ENCODE measurements at regions of chr6 and their contacts with region 1.

Region 1: GRCh38 chr6:168640752-168641151 is 199.8 kb downstream of the SMOC2 start:
- DNase-seq: no peak
- H3K4me3 ChIP-seq: no peak overlapping the region
- H3K27ac ChIP-seq: no peak overlapping the region
- H3K4me1 ChIP-seq: peaks cover 15% of the 10 kb centered on the region
- H3K27me3 ChIP-seq: no peaks in the 10 kb centered on the region
- CTCF ChIP-seq: no peak

Region 2: GRCh38 chr6:168677834-168678476 is 37.2 kb after region 1 on chr6:
- CTCF ChIA-PET with region 1: no interaction called
- POLR2A ChIA-PET with region 1: no interaction called
- intact Hi-C with region 1: loop called (anchors 5 kb)
- DNase-seq: peak in 1 of 2 experiments; percentile 63
- H3K4me3 ChIP-seq: peak overlapping the region; percentile 33; the same call in 1 of the 2 replicates
- H3K27ac ChIP-seq: peak overlapping the region; percentile 97
- H3K4me1 ChIP-seq: peaks cover 42% of the 10 kb centered on the region
- H3K27me3 ChIP-seq: no peaks in the 10 kb centered on the region
- CTCF ChIP-seq: no peak

Region 3: GRCh38 chr6:168692193-168692914 is 51.6 kb after region 1 on chr6:
- CTCF ChIA-PET with region 1: no interaction called
- POLR2A ChIA-PET with region 1: no interaction called
- intact Hi-C with region 1: no loop called
- DNase-seq: no peak
- H3K4me3 ChIP-seq: no peak overlapping the region
- H3K27ac ChIP-seq: no peak overlapping the region
- H3K4me1 ChIP-seq: peaks cover 34% of the 10 kb centered on the region
- H3K27me3 ChIP-seq: no peaks in the 10 kb centered on the region
- CTCF ChIP-seq: no peak

Region 4: DNA sequence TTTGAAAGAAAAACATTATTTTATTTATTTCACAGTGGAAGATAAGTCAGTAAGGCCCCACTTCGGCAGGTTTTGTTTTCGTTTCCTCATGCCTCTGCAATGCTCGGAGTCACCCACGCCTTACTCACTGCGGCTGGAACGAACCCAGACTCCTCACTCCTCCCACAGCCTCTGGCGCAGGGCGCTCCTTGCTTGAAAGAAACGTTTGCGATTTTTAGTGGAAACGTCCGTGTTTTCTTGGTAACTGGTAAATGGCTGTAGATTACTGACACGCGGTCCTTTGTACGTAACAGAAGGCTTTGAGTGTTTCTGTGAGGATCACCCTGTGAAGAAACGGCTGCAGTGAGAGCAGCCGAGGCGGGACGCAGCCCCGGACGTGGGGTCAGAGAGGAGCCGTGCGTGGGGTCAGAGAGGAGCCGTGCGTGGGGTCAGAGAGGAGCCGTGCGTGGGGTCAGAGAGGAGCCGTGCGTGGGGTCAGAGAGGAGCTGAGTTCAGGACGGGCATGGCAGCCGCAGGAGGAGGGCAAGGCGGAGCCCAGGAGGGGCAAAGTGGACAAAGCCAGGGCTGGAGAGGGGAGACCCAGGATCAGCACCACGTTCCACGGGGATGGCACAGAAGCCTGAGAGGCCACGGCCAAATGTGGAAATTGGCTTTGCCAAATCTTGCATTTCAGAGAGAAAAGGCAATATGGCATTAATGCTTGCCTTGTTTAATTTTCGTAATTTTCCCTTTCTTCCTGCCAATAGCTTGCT is 811.5 kb after region 1 on chr6:
- CTCF ChIA-PET with region 1: no interaction called
- POLR2A ChIA-PET with region 1: no interaction called
- intact Hi-C with region 1: no loop called
- DNase-seq: peak; percentile 52 to 70
- H3K4me3 ChIP-seq: peak overlapping the region; percentile 55; the same call in 1 of the 2 replicates
- H3K27ac ChIP-seq: no peak overlapping the region
- H3K4me1 ChIP-seq: no peaks in the 10 kb centered on the region
- H3K27me3 ChIP-seq: no peaks in the 10 kb centered on the region
- CTCF ChIP-seq: no peak

Measured in PC-9 (cell line).